ENCODE measurements at regions of chr7 and their contacts with region 1.

Region 1: GRCh38 chr7:159127691-159128642 is 16.7 kb downstream of the VIPR2 start:
- DNase-seq: no peak
- H3K4me3 ChIP-seq: no peak overlapping the region
- H3K27ac ChIP-seq: no peak overlapping the region
- H3K4me1 ChIP-seq: peaks cover 0 to 12% (median 0%) of the 10 kb centered on the region in 4 donors
- H3K27me3 ChIP-seq: peaks cover 0 to 36% (median 0%) of the 10 kb centered on the region in 4 donors
- CTCF ChIP-seq: no peak
- EP300 ChIP-seq: no peak
- POLR2A ChIP-seq: no peak

Region 2: GRCh38 chr7:159158888-159159405 is 31.0 kb after region 1 on chr7:
- intact Hi-C with region 1: loop called (anchors 2 kb)
- DNase-seq: peak; percentile 86
- H3K4me3 ChIP-seq: no peak overlapping the region
- H3K27ac ChIP-seq: no peak overlapping the region
- H3K4me1 ChIP-seq: no peaks in the 10 kb centered on the region
- H3K27me3 ChIP-seq: peaks cover 0 to 7% (median 0%) of the 10 kb centered on the region in 4 donors
- CTCF ChIP-seq: no peak
- EP300 ChIP-seq: no peak
- POLR2A ChIP-seq: no peak